Stomach (tissue), 19 donors: ENCODE measurements at regions of chr12 and their contacts with region 1.

Region 1: DNA sequence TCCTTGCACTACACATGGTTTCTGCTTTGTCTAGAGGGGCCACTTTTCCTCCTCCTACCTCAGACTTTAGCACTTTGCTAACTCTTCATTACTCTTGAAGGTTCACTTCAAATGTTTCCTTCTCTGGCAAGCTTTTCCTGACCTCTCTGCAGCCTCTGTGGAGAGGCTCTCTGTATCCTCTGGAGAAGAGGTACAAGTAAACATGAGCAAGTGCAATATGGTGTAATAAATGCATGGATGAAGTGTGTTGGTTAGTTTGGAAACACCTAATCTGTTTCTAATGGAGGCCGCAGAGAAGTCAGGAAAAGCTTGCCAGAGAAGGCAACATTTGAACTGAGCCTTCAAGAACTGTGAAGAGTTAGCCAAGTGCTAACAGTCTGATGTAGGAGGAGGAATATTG is 329.3 kb downstream of the GRIN2B start:
- DNase-seq: no peak
- H3K4me3 ChIP-seq: no peak overlapping the region
- H3K27ac ChIP-seq: no peak overlapping the region
- H3K4me1 ChIP-seq: no peaks in the 10 kb centered on the region
- H3K27me3 ChIP-seq: no peaks in the 10 kb centered on the region
- CTCF ChIP-seq: no peak
- EP300 ChIP-seq: no peak
- POLR2A ChIP-seq: no peak

Region 2: GRCh38 chr12:13282861-13283260 is 369.2 kb before region 1 on chr12:
- intact Hi-C with region 1: loop called (anchors 5 kb)
- DNase-seq: no peak
- H3K4me3 ChIP-seq: no peak overlapping the region
- H3K27ac ChIP-seq: no peak overlapping the region
- H3K4me1 ChIP-seq: peaks cover 0 to 9% (median 9%) of the 10 kb centered on the region in 4 donors
- H3K27me3 ChIP-seq: no peaks in the 10 kb centered on the region
- CTCF ChIP-seq: no peak
- EP300 ChIP-seq: no peak
- POLR2A ChIP-seq: no peak